Posterior vena cava (tissue), 2 donors: ENCODE measurements at regions of chr14 and their contacts with region 1.

Region 1: DNA sequence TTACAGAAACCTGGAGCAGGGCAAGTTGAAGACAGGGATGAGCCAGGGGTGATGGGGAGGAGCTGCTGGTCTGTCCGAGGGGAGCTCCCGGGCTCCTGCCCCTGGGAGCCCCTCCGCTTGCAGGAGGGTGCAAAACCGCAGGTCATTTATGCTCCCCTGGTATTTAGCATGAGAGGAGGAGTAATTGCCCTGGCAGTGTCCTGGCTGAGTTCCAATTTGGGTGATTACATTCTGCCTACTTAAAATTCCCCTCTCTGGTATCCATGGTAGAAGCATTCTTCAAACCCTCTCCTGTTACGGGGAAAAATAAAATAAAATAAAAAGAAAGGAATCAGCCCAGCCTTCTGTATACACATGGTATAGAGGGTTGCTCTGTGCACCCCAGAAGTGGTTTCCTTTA is 61.7 kb upstream of the VRK1 start:
- DNase-seq: no peak

Region 2: GRCh38 chr14:96584199-96584906 is 151.2 kb before region 1 on chr14:
- intact Hi-C with region 1: loop called in 1 of 2 experiments (anchors 10 kb)
- DNase-seq: peak; percentile 77

Region 3: GRCh38 chr14:98462908-98463307 is 1727.4 kb after region 1 on chr14:
- intact Hi-C with region 1: loop called in 1 of 2 experiments (anchors 5 kb)
- DNase-seq: no peak